Right ventricle myocardium inferior (tissue), 1 donor: ENCODE measurements at regions of chr3 and their contacts with region 1.

Region 1: DNA sequence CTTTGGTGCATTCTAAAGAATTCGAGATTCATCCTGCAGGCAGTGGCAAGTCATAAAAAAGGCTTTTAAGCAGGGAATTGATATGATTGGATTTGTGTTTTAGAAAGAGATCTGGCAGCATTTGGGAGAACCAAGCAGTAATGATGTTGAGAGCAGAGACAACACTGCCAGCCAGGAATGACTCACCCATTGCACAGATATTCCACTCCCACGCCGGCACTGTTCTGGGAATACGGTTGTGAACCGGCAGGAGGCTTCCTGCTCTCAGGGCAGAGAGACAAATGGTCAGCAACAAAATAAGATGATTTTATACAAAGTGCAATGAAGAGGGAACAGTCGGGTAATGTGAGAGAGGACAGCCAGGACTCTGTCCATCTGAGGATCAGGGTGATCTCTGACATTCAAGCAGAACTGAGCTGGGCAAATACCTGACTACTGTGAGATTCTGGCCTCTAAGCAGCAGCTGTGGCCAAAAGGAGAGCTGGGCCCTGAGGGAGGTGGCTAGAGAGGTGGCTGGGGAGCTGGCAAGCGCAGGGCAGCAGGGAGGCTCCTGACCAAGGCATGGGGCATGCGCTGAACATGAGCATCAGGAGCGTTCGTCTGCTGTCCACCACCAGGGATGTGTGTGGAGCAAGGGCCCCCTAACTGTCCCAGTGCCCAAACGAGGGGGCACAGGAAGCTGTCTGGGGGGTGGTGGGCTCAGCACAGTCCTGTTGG is 56.1 kb upstream of the PLXNA1 start:
- DNase-seq: no peak
- ATAC-seq: peak; percentile 89

Region 2: GRCh38 chr3:126969586-126969985 is 42.7 kb after region 1 on chr3:
- intact Hi-C with region 1: loop called (anchors 5 kb)
- DNase-seq: no peak
- ATAC-seq: no peak